ENCODE measurements at regions of chr16 and their contacts with region 1.

Region 1: GRCh38 chr16:19067349-19068236 is at the start of gene COQ7:
- H3K4me3 Mint-ChIP-seq: peak within 1 kb of the TSS; percentile 86
- H3K27ac Mint-ChIP-seq: peak within 1 kb of the TSS; percentile 98
- H3K4me1 Mint-ChIP-seq: peaks cover 10% of the 10 kb centered on the region
- H3K27me3 Mint-ChIP-seq: no peaks in the 10 kb centered on the region

Region 2: DNA sequence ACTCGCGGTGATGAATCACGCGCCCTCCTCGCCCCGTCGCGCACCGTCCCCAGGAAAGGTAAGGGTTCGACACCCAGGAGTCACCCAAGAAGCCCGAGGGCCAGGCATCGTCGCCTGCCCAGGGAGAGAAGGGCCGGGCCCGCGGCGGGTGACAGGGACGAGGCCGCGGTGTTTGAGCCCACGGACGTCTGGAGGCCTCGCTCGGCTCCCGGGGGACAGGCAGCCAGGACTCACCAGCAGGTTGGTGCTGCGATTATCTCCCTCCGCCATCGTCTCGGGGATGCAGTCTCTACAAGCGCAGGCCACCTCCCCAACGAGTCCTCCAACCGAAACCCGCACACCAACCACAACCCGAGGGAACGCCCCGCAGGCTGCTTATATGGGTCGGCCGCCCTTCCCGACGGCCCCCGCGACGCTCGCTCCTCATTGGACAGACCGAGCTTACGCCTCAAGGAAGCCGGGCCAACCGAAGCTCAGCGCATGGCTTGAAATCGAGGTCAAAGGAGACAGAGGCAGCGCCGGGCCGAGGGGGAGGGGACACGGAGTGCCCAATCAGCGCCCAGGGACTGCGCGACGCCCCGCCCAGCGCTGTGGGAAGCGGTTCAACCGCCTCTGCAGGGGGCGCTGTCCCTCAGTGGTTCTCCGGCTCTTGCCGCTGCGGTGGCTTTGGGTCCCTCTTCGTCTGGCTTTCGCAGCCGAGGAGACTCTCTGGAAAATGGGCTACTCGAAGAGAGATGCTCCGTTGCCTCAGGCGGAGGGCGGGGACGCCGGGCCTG is 266.2 kb before region 1 on chr16 and contains the start of gene ARL6IP1:
- intact Hi-C with region 1: loop called (anchors 5 kb)
- H3K4me3 Mint-ChIP-seq: peak within 1 kb of the TSS; percentile 93
- H3K27ac Mint-ChIP-seq: peak within 1 kb of the TSS; percentile 92
- H3K4me1 Mint-ChIP-seq: peaks cover 43% of the 10 kb centered on the region
- H3K27me3 Mint-ChIP-seq: no peaks in the 10 kb centered on the region

Region 3: DNA sequence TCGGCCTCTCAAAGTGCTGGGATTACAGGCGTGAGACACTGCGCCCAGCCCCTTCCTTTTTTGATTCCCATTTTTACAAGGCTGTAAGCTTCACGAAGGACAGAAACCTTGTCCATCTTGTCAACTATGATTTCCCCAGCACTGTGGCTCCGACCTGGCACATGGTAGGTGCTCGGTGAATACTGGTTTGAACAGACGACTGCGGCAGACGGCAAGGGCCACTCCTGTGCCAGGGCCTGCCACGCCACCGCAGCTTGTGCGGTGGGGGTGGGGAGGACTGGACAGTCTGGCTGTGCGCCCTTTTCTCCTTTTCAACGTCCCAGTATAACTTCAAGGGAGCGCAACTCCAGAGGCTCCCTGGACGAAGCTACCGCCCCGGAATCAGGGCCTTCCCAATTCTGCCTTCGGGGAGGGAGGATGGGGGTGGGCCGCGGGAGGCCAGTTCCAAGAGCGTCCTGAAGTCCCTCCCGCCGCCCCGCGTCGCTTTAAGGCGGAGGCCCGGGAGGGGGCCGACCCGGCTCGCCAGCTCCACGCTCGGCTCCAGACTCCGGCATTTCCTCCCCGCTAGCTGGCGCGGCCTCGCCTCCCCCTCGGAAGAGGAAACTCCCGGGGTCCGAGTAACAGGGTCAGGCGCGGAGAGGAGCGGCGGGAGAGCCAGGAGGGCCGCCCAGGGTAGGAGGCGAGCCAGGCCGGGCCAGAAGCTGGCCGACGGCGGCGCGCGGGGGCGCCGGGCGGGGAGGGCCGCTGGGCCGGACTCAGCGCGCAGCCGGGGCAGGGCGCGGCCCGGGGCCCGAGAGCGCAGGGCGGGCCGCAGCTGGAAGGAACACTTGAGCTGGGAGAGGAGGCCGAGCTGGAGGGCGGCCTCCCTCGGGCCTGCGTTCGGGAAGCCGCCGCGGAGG is 46.1 kb after region 1 on chr16 and contains the start of gene ITPRIPL2:
- intact Hi-C with region 1: no loop called
- H3K4me3 Mint-ChIP-seq: peak within 1 kb of the TSS; percentile 97
- H3K27ac Mint-ChIP-seq: peak within 1 kb of the TSS; percentile 93
- H3K4me1 Mint-ChIP-seq: peaks cover 46% of the 10 kb centered on the region
- H3K27me3 Mint-ChIP-seq: no peaks in the 10 kb centered on the region

Region 4: GRCh38 chr16:19521471-19522396 is 454.1 kb after region 1 on chr16 and contains the start of gene GDE1:
- intact Hi-C with region 1: loop called (anchors 10 kb)
- H3K4me3 Mint-ChIP-seq: peak within 1 kb of the TSS; percentile 90
- H3K27ac Mint-ChIP-seq: peak within 1 kb of the TSS; percentile 96
- H3K4me1 Mint-ChIP-seq: peaks cover 55% of the 10 kb centered on the region
- H3K27me3 Mint-ChIP-seq: no peaks in the 10 kb centered on the region

Region 5: DNA sequence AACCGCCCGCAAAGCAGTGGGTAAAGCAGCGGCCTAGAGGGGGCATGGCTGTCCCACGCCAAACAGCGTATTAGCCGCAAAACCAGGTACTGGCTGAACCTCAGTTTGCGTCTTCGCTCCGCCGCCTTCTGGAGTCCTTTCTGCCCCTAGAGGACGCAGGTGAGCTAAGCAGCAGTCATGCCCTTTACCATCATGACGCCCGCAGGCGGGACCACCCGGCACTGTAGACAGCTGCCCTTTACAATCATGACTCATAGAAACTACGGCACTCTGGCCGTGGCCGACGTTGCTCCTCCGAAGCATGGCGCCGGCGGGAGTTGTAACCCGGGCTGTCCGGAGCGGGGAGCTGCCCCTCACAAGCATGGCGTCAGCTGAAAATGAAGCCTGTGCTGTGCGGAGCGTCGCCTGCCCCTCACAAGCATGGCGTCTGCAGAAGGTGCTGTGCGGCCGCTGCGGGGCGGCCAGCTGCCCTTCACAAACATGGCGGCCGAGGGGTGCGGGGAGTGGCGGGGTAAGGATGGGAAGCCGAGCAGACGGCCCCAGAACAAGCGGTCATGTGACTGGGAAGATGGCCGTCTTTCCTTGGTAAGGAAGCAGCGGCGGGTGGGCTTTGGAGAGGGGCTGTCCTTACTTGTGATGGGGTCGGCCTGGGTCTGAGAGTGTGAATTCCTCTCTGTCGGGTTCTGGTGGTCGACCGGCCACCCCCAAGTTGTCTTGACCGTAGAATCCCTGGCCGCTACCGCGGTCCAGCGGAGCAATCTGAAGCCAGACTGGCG is 487.8 kb after region 1 on chr16 and contains the start of gene VPS35L:
- intact Hi-C with region 1: loop called (anchors 1 kb)
- H3K4me3 Mint-ChIP-seq: peak within 1 kb of the TSS; percentile 75
- H3K27ac Mint-ChIP-seq: peak within 1 kb of the TSS; percentile 92
- H3K4me1 Mint-ChIP-seq: peaks cover 24% of the 10 kb centered on the region
- H3K27me3 Mint-ChIP-seq: no peaks in the 10 kb centered on the region

Measured in dendritic cell treated with granulocyte-macrophage colony-stimulating factor and Interleukin-4, amounts not matched to agents 40 ng/mL and 50 ng/mL, for 4 days (primary cell).